IMR-90 (cell line): ENCODE measurements at regions of chr3 and their contacts with region 1.

Region 1: GRCh38 chr3:143424874-143425273 is 305.3 kb downstream of the CHST2 start:
- DNase-seq: no peak
- ATAC-seq: no peak
- H3K4me3 ChIP-seq: no peak overlapping the region
- H3K27ac ChIP-seq: no peak overlapping the region
- H3K4me1 ChIP-seq: 0 out of 2 replicates have a peak, but pooled peaks cover 2% of the 10 kb centered on the region
- H3K27me3 ChIP-seq: no peaks in the 10 kb centered on the region
- CTCF ChIP-seq: no peak
- POLR2A ChIP-seq: no peak
- RAD21 ChIP-seq: no peak

Region 2: DNA sequence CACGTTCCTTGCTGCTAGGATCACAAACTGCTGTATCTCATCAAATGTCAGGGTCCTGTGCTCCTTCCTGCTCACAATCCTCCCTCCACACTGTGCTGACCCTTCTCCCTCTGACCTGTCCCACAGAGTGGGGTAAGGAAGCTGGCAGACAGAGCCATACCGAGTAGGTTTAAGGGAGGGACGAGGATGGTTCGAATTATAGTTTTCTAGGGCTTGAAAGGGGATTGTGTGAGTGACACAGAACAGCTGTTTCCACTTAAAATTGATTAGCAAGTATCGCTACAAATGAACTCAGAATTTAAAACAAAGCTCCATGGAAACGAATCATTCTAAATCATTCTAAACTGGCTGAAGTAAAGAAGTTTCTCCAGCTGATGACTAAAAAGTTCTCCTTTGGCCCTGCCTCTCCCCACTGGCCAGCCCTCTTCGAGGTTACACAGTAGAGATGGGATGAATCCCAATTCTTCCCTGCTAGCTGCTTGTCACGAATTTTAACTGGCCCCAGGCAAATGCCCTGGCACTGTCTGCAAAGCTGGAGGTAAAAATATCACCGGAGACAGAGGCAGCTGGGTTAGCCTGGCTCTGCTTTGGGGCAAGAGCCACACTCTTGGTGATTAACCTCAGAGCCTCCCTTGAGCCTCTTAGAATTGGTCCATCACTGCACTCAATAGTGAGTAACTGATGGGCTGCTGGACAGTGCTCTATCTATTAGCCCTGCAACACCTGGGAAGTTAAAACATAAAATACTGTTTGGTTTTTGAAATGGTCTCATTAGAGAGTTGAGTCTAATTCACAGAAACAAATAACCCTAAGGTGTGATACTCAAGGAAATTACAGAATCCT is 110.4 kb before region 1 on chr3:
- CTCF ChIA-PET with region 1: no interaction called
- POLR2A ChIA-PET with region 1: no interaction called
- dilution Hi-C with region 1: no loop called
- in situ Hi-C with region 1: no loop called
- intact Hi-C with region 1: no loop called
- DNase-seq: no peak
- ATAC-seq: no peak
- H3K4me3 ChIP-seq: no peak overlapping the region
- H3K27ac ChIP-seq: no peak overlapping the region
- H3K4me1 ChIP-seq: no peaks in the 10 kb centered on the region
- H3K27me3 ChIP-seq: peaks cover 3% of the 10 kb centered on the region
- CTCF ChIP-seq: no peak
- POLR2A ChIP-seq: no peak
- RAD21 ChIP-seq: no peak

Region 3: DNA sequence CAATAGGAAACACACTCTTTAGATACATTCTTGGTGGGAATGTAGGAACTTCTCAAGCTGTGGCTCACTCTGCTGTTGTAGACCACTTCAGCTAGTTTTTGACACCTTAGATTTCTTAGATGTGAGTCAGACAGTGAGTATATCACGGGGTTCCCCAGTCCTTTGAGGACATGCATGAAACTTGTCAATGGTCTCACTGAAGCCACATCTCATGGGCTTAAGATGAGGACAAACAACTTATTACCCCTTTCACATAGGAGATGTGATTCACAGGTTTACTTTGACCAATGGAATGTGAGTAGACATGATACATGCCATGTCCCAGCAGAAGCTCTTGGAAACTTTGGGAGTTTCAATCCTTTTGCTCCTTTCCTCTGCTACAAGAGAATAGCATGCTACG is 20.2 kb after region 1 on chr3:
- CTCF ChIA-PET with region 1: no interaction called
- POLR2A ChIA-PET with region 1: interaction called, 10 read pairs
- dilution Hi-C with region 1: no loop called
- in situ Hi-C with region 1: no loop called
- intact Hi-C with region 1: no loop called
- DNase-seq: peak; percentile 51
- ATAC-seq: no peak
- H3K4me3 ChIP-seq: no peak overlapping the region
- H3K27ac ChIP-seq: no peak overlapping the region
- H3K4me1 ChIP-seq: peaks cover 7% of the 10 kb centered on the region; the same call in 1 of the 2 replicates
- H3K27me3 ChIP-seq: no peaks in the 10 kb centered on the region
- CTCF ChIP-seq: no peak
- POLR2A ChIP-seq: no peak
- RAD21 ChIP-seq: no peak